PC-3 (cell line): ENCODE measurements at regions of chr6 and their contacts with region 1.

Region 1: GRCh38 chr6:157823001-157823527 is at the start of gene SNX9:
- DNase-seq: peak; percentile 69
- ATAC-seq: peak; percentile 70
- H3K4me3 ChIP-seq: peak within 1 kb of the TSS; percentile 83
- H3K27ac ChIP-seq: peak within 1 kb of the TSS; percentile 51
- H3K4me1 ChIP-seq: peaks cover 6% of the 10 kb centered on the region
- H3K27me3 ChIP-seq: no peaks in the 10 kb centered on the region
- CTCF ChIP-seq: no peak
- total RNA-seq, gene SNX9: 18.0 and 21.3 TPM in 2 replicates

Region 2: GRCh38 chr6:157715765-157716164 is 107.3 kb before region 1 on chr6:
- CTCF ChIA-PET with region 1: no interaction called
- POLR2A ChIA-PET with region 1: no interaction called
- intact Hi-C with region 1: no loop called
- DNase-seq: no peak
- ATAC-seq: no peak
- H3K4me3 ChIP-seq: no peak overlapping the region
- H3K27ac ChIP-seq: no peak overlapping the region
- H3K4me1 ChIP-seq: no peaks in the 10 kb centered on the region
- H3K27me3 ChIP-seq: no peaks in the 10 kb centered on the region
- CTCF ChIP-seq: no peak

Region 3: GRCh38 chr6:157764178-157765033 is 58.7 kb before region 1 on chr6:
- CTCF ChIA-PET with region 1: no interaction called
- POLR2A ChIA-PET with region 1: no interaction called
- intact Hi-C with region 1: loop called (anchors 2 kb)
- DNase-seq: peak; percentile 95
- ATAC-seq: peak; percentile 73
- H3K4me3 ChIP-seq: peak overlapping the region; percentile 50; the same call in 1 of the 2 replicates
- H3K27ac ChIP-seq: peak overlapping the region; percentile 88
- H3K4me1 ChIP-seq: peaks cover 61% of the 10 kb centered on the region
- H3K27me3 ChIP-seq: no peaks in the 10 kb centered on the region
- CTCF ChIP-seq: no peak

Region 4: DNA sequence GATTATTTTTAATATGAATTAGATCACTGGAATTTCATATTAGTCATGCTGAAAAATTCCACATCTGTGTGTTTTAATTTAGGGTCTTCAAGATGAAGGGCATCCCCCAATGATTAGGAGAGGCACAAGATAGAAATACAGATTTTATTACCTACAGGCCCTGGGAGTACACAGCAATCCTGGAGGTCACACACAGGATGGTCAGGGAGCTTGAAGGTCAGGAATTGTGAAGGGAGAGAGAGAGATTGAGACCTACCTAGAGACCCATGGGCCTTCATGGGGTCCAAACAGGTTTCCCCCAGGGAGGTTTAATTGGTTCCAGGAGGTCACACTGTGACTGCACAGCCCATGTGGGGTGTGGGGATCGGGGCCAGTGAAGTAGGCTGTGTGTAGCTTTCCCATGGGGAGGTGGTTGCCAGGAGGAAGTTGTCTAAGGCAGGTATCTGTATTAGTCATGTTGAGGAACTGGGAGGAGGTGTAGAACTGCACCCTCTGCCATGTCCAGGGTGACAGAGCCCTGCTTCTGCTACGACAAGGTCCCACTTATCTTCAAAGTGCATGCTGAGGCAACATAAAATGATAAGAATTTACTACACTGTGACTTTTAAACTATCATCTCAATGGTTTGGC is 18.3 kb after region 1 on chr6:
- CTCF ChIA-PET with region 1: no interaction called
- POLR2A ChIA-PET with region 1: interaction called, 16 read pairs
- intact Hi-C with region 1: no loop called
- DNase-seq: peak; percentile 61
- ATAC-seq: peak; percentile 77
- H3K4me3 ChIP-seq: no peak overlapping the region; the same call in 1 of the 2 replicates
- H3K27ac ChIP-seq: peak overlapping the region; percentile 76
- H3K4me1 ChIP-seq: peaks cover 53% of the 10 kb centered on the region
- H3K27me3 ChIP-seq: no peaks in the 10 kb centered on the region
- CTCF ChIP-seq: no peak